Activated T-helper 1 cell treated with anti-CD3 and anti-CD28 coated beads, Interleukin-12 subunit alpha, Interleukin-12 subunit beta, Interleukin-2, Interleukin-4 antibody, amounts not matched to agents 30 ng/mL and 10 ng/mL and 1 ng/mL, durations not matched to agents 14 hours and 24 hours and 36 hours (primary cell): ENCODE measurements at regions of chr2 and their contacts with region 1.

Region 1: DNA sequence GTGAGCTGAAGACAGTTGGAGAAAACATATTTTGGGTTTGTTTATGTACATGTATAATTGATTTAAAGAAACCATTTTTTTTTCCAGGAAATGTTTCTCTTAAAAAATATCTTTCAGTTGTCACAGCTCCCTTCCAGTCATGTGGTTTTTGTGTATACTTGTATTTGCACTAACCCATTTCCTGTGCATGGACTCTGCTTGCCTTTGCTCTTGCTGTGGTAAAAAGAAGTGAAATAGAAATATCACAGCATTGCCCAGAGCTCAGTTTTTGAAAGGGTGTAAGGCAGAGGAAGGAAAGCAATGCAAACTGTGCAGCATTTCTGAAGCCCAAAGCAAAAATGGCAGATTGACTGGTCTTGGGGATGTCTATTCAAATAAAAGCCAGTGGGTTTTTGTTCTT is 10.4 kb upstream of the DOCK10 start:
- DNase-seq: peak; percentile 50
- H3K4me3 Mint-ChIP-seq: peak overlapping the region; percentile 29
- H3K27ac Mint-ChIP-seq: peak overlapping the region; percentile 95
- H3K4me1 Mint-ChIP-seq: peaks cover 69% of the 10 kb centered on the region
- H3K27me3 Mint-ChIP-seq: peaks cover 7% of the 10 kb centered on the region

Region 2: GRCh38 chr2:224922142-224922727 is 130.5 kb before region 1 on chr2:
- intact Hi-C with region 1: no loop called
- DNase-seq: no peak
- H3K4me3 Mint-ChIP-seq: no peak overlapping the region
- H3K27ac Mint-ChIP-seq: peak overlapping the region; percentile 62
- H3K4me1 Mint-ChIP-seq: peaks cover 51% of the 10 kb centered on the region
- H3K27me3 Mint-ChIP-seq: no peaks in the 10 kb centered on the region

Region 3: GRCh38 chr2:225065882-225066281 is 13.2 kb after region 1 on chr2:
- intact Hi-C with region 1: loop called (anchors 2 kb)
- DNase-seq: no peak
- H3K4me3 Mint-ChIP-seq: no peak overlapping the region
- H3K27ac Mint-ChIP-seq: no peak overlapping the region
- H3K4me1 Mint-ChIP-seq: peaks cover 29% of the 10 kb centered on the region
- H3K27me3 Mint-ChIP-seq: no peaks in the 10 kb centered on the region

Region 4: DNA sequence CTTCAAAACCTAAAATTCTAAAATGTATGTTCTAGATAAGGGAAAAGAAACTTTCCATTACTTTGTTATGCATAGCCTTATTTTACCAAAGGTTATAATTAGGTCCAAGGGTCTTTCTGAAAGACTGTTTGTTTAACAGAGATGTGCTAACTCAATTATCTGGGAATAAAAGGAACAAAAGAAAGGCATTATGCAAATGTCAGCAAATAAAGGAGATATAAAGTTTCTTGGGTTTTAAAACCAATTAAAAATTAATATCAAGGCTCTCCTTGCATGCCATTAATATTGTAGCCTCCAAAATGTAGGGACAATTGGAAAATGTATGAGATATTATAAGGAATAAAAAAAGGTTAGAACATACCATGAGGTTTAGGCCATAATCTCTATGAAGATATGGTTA is 77.4 kb after region 1 on chr2:
- intact Hi-C with region 1: no loop called
- DNase-seq: no peak
- H3K4me3 Mint-ChIP-seq: no peak overlapping the region
- H3K27ac Mint-ChIP-seq: no peak overlapping the region
- H3K4me1 Mint-ChIP-seq: no peaks in the 10 kb centered on the region
- H3K27me3 Mint-ChIP-seq: peaks cover 3% of the 10 kb centered on the region